ENCODE measurements at regions of chr9 and their contacts with region 1.

Region 1: GRCh38 chr9:22238809-22239684 is 207.6 kb upstream of the DMRTA1 start:
- DNase-seq: no peak

Region 2: DNA sequence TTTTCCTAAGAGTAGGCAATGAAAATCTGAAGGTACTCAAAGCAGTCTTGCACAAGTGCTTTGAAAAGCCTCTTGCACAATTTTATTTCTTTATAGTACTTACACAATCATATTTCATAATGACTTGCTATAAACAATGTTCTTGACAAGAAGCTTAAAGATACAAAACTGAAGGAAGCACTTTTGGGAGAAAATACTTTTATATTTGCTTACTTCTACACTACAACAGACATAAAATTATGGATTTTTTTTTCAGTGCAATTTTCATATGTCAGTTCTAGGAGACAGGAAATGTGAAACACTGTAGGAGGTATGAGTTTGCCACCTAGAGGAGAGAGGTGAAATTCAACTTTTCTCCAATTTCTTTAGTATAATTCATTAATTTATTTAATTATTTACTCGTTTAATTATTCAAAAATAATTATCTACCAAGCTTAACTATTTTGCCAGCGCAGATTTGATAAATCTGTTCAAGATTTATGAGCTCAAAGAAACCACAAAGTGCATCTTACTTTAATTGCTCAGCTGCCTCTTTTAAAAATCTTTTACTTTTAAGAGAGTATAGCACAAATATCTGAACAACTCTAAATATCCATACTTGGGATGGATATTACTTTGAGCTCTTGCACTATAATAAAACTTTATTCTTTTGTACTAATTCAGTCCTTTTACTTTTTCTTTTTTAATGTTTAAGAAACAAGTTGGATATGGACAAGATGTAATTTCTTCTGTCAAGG is 200.9 kb before region 1 on chr9:
- intact Hi-C with region 1: loop called (anchors 10 kb)
- DNase-seq: no peak

Region 3: DNA sequence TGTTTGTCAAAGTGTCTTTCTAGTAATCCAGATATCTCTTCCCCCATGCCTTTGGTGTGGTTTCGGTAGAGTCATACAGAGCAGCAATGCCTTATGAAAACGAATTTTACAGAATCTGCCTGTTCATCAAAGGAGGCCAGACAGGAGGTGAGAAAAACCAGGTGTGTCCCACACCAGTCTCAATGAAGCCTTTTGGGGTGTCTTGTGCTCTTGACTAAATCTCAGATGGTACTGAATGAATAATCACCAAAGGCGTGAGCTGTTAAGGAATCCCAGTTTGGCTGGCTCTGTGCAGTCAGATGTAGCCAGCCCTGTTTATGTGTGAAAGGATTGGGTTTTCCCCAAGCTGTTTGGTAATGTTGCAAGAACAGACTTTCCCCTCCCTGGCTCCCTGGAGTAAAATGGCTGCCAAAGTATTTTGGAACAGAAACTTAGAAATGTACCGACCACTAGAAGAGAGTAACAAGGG is 159.1 kb before region 1 on chr9:
- intact Hi-C with region 1: no loop called
- DNase-seq: no peak

Measured in cardiac septum (tissue), 1 donor.